Mammary epithelial cell (primary cell): ENCODE measurements at regions of chr11 and their contacts with region 1.

Region 1: GRCh38 chr11:69862331-69862771 is 43.1 kb upstream of the FGF3 start:
- DNase-seq: no peak
- H3K4me3 ChIP-seq: no peak overlapping the region
- H3K27ac ChIP-seq: no peak overlapping the region
- H3K4me1 ChIP-seq: no peaks in the 10 kb centered on the region
- H3K27me3 ChIP-seq: no peaks in the 10 kb centered on the region
- CTCF ChIP-seq: no peak

Region 2: GRCh38 chr11:69825037-69825834 is 37.1 kb before region 1 on chr11:
- CTCF ChIA-PET with region 1: no interaction called
- dilution Hi-C with region 1: no loop called
- in situ Hi-C with region 1: no loop called
- intact Hi-C with region 1: no loop called
- DNase-seq: no peak
- H3K4me3 ChIP-seq: no peak overlapping the region
- H3K27ac ChIP-seq: no peak overlapping the region
- H3K4me1 ChIP-seq: peaks cover 7% of the 10 kb centered on the region
- H3K27me3 ChIP-seq: peaks cover 19% of the 10 kb centered on the region
- CTCF ChIP-seq: no peak

Region 3: DNA sequence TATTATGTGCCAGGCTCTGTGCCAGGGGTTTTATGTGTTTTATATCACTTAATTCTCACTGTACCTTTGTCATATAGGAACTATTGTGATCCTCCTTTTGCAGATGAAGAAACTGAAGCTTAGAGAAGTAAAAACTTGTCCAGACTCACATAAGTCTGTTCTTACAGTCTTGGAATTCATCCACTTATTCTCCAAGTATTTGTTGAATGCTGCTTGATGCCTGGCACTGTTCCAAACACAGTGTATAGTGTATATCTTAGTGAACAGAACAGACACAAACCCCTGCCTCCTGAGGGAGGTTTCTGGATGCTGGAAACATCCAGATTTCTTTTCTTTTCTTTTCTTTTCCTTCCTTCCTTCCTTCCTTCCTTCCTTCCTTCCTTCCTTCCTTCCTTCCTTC is 14.2 kb before region 1 on chr11:
- CTCF ChIA-PET with region 1: no interaction called
- dilution Hi-C with region 1: no loop called
- in situ Hi-C with region 1: no loop called
- intact Hi-C with region 1: no loop called
- DNase-seq: peak; percentile 59
- H3K4me3 ChIP-seq: no peak overlapping the region
- H3K27ac ChIP-seq: no peak overlapping the region
- H3K4me1 ChIP-seq: peaks cover 6% of the 10 kb centered on the region
- H3K27me3 ChIP-seq: no peaks in the 10 kb centered on the region
- CTCF ChIP-seq: no peak

Region 4: DNA sequence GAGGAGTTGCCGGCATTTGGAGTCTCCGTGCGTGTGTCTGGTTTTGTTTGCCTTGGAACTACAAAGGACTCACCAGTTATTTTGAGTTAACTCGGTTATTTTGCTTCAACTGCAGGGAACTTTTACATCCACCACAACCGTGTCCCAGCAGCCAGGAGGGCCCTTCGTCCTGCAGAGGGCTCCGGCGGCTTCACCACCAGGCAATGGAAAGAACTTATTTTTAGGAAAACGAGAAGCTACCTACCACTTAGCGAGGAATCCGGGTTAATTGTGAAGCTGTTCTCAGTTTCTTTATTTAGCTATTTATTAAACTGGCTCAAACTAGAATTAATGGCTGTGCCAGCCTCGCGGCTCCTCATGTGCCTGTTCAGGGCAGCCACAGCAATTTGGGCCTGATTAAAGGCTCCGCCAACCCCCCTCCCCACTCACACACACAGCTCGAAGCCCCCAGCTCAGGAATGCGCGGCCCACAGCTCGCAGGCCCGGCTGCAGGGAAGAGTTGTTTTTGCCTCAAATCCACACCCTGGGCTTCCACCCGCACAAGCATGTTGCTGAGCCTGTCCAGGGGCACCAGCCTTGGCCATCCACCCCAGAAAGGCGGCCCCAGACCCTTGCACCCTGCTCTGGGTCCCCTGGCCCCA is 12.8 kb after region 1 on chr11:
- CTCF ChIA-PET with region 1: no interaction called
- dilution Hi-C with region 1: no loop called
- in situ Hi-C with region 1: no loop called
- intact Hi-C with region 1: loop called (anchors 1 kb)
- DNase-seq: no peak
- H3K4me3 ChIP-seq: no peak overlapping the region
- H3K27ac ChIP-seq: no peak overlapping the region
- H3K4me1 ChIP-seq: no peaks in the 10 kb centered on the region
- H3K27me3 ChIP-seq: no peaks in the 10 kb centered on the region
- CTCF ChIP-seq: no peak